ENCODE measurements at regions of chr5 and their contacts with region 1.

Region 1: GRCh38 chr5:173155912-173156311 is 11.6 kb downstream of the BNIP1 start:
- DNase-seq: no peak
- H3K4me3 ChIP-seq: no peak overlapping the region
- CTCF ChIP-seq: no peak

Region 2: DNA sequence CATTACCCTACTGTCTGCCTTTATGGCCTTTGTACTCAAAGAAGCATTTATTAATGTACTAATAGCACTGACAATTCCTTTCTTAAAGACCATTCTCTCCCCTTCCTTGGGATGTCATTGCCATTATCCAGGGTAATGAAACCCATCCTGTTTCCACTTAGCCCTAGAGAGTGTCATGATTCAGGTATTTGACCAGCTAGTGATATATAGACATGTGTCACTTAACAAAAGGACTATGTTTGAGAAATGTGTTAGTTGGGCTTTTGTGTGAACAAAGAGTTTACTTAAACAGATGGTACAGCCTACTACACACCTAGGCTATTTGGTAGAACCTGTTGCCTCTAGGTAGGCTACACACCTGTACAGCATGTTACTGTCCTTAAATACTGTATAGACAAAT is 170.3 kb before region 1 on chr5:
- CTCF ChIA-PET with region 1: no interaction called
- POLR2A ChIA-PET with region 1: no interaction called
- DNase-seq: no peak
- H3K4me3 ChIP-seq: peak overlapping the region; percentile 29
- CTCF ChIP-seq: no peak

Region 3: DNA sequence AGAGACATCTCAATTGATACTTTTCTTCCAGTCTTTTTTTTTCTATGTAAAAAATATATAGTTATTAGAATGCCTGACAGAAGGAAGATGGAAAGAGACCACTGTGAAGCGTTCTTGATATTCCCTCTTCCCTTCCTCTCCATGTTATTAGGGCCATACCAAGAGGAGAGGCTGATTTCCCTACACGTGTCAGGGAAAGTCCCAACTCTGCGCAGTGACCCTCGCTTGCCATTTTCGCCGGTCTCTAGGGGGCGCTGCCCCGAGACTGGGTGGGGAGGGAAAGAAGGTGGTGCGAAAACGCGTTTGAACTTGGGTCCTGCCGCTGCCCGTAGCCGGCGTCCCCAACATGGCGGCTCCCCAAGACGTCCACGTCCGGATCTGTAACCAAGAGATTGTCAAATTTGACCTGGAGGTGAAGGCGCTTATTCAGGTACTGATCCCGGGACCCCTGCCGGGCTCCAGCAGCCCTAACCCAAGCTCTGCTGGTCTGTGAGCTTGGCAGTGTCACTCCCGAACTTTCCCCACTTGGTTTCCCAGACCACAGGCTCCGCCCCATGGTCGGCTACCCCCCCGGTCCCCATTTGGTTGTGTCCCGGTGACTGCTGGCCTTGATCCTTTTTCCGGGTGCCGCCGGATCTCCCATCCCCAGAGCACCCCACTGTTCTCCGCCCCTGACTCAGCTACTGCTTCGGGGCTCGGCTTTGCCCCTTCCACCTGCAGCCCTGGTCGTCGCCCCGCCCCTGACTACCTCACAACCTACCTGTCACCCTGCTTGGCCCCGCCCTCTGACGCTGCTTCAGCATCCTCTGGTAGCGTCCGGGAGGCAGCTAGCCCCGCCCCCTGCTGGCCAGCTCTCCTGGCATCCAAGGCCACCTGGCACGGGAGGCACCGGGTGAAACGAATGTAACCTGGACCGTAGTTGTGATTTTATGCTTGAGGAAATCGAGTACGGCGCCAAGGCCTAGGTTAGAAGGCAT is 11.4 kb before region 1 on chr5 and contains the start of gene BNIP1:
- CTCF ChIA-PET with region 1: interaction called, 14 read pairs
- POLR2A ChIA-PET with region 1: no interaction called
- DNase-seq: peak; percentile 71
- H3K4me3 ChIP-seq: peak within 1 kb of the TSS; percentile 100
- CTCF ChIP-seq: peak; percentile 99